ENCODE measurements at regions of chr3 and their contacts with region 1.

Region 1: GRCh38 chr3:142828703-142829305 is 60.1 kb downstream of the PCOLCE2 start:
- DNase-seq: peak; percentile 51
- H3K4me3 ChIP-seq: no peak overlapping the region
- H3K27ac ChIP-seq: no peak overlapping the region
- H3K27me3 ChIP-seq: no peaks in the 10 kb centered on the region
- CTCF ChIP-seq: peak; percentile 93

Region 2: GRCh38 chr3:141421639-141422330 is 1407.0 kb before region 1 on chr3:
- CTCF ChIA-PET with region 1: no interaction called
- POLR2A ChIA-PET with region 1: no interaction called
- DNase-seq: no peak
- H3K4me3 ChIP-seq: no peak overlapping the region
- H3K27ac ChIP-seq: peak overlapping the region; percentile 89
- H3K27me3 ChIP-seq: no peaks in the 10 kb centered on the region
- CTCF ChIP-seq: no peak

Region 3: DNA sequence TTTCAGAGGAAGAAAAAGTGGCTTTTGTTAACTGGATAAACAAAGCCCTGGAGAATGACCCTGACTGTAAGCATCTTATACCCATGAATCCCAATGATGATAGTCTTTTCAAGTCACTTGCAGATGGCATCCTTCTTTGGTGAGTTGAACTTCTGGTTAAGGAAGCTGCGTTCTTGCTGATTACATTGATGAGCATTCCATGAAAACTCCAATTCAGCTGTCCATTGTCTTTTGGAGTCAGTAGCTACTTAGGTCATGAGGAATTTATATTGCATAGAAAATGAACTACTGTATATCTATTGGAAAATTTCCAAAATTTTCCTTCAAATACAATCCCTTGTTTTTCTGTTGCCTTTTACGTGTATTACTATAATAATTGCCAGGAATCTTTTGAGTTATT is 152.7 kb before region 1 on chr3:
- CTCF ChIA-PET with region 1: no interaction called
- POLR2A ChIA-PET with region 1: no interaction called
- DNase-seq: no peak
- H3K4me3 ChIP-seq: no peak overlapping the region
- H3K27ac ChIP-seq: no peak overlapping the region
- H3K27me3 ChIP-seq: no peaks in the 10 kb centered on the region
- CTCF ChIP-seq: no peak

Region 4: DNA sequence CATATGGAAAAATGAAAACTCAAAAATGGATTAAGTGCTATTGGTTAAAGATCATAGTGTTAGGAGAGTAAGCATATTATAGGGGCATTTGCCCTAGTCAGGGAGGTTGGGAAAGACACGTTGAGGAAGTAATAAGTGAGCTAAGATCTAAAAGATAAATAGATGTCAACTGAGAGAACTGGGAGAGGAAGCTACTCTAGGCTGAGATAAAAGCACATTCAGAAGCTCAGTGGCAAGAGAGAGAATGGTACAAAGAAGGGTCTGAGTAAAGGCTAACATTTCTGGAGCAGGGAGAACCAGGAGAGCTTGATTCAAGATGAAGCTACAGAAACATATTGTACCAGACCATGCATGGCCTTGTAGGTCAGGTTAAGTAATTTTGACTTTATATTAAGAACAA is 41.1 kb before region 1 on chr3:
- CTCF ChIA-PET with region 1: interaction called, 13 read pairs
- POLR2A ChIA-PET with region 1: no interaction called
- DNase-seq: no peak
- H3K4me3 ChIP-seq: no peak overlapping the region
- H3K27ac ChIP-seq: no peak overlapping the region
- H3K27me3 ChIP-seq: no peaks in the 10 kb centered on the region
- CTCF ChIP-seq: no peak

Region 5: DNA sequence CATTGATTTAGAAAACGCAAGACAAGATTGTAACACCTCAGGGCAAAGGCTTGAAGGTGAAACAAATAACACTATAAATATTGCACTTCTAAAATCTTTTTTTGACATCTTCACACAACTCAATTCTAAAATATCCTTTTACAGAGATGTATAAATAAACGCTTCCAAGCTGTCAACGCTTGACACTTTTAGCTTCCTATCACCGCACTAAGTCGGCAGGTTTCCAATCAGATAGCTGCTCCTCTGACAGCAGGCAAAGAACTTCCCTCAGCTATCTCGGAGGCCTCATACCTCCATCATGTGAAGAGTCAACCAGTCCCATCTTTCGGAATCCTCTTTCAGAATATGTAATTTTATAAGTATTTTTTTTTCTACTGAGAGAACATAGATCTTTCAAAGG is 10.9 kb before region 1 on chr3:
- CTCF ChIA-PET with region 1: interaction called, 61 read pairs
- POLR2A ChIA-PET with region 1: no interaction called
- DNase-seq: no peak
- H3K4me3 ChIP-seq: no peak overlapping the region
- H3K27ac ChIP-seq: no peak overlapping the region
- H3K27me3 ChIP-seq: no peaks in the 10 kb centered on the region
- CTCF ChIP-seq: no peak

Region 6: DNA sequence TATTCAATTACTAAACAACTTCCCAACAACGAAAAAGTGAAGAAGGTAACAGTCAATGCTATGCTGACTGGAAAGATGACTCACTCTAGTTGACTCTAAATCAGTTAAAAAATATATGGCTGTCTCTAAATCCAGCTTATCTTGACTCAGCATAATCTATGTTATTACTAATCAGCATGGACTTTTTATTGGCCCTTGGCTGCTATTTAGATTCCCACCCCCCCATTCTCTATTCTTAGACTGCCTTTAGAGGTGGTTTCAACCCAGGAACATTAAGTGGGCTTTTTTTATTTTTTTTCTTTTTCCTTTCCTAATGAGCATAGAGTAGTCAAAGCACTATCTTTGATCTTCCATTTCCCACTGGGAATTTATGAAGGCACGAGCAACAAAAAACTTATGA is 58.1 kb after region 1 on chr3:
- CTCF ChIA-PET with region 1: interaction called, 16 read pairs
- POLR2A ChIA-PET with region 1: no interaction called
- DNase-seq: no peak
- H3K4me3 ChIP-seq: no peak overlapping the region
- H3K27ac ChIP-seq: no peak overlapping the region
- H3K27me3 ChIP-seq: peaks cover 24% of the 10 kb centered on the region
- CTCF ChIP-seq: no peak

Region 7: GRCh38 chr3:142987080-142987700 is 158.4 kb after region 1 on chr3:
- CTCF ChIA-PET with region 1: interaction called, 167 read pairs
- POLR2A ChIA-PET with region 1: no interaction called
- DNase-seq: no peak
- H3K4me3 ChIP-seq: no peak overlapping the region
- H3K27ac ChIP-seq: no peak overlapping the region
- H3K27me3 ChIP-seq: no peaks in the 10 kb centered on the region
- CTCF ChIP-seq: peak; percentile 67

Region 8: GRCh38 chr3:143016321-143016972 is 187.6 kb after region 1 on chr3:
- CTCF ChIA-PET with region 1: interaction called, 17 read pairs
- POLR2A ChIA-PET with region 1: no interaction called
- DNase-seq: no peak
- H3K4me3 ChIP-seq: no peak overlapping the region
- H3K27ac ChIP-seq: no peak overlapping the region
- H3K27me3 ChIP-seq: no peaks in the 10 kb centered on the region
- CTCF ChIP-seq: peak; percentile 46